CD14-positive monocyte (primary cell): ENCODE measurements at regions of chr5 and their contacts with region 1.

Region 1: DNA sequence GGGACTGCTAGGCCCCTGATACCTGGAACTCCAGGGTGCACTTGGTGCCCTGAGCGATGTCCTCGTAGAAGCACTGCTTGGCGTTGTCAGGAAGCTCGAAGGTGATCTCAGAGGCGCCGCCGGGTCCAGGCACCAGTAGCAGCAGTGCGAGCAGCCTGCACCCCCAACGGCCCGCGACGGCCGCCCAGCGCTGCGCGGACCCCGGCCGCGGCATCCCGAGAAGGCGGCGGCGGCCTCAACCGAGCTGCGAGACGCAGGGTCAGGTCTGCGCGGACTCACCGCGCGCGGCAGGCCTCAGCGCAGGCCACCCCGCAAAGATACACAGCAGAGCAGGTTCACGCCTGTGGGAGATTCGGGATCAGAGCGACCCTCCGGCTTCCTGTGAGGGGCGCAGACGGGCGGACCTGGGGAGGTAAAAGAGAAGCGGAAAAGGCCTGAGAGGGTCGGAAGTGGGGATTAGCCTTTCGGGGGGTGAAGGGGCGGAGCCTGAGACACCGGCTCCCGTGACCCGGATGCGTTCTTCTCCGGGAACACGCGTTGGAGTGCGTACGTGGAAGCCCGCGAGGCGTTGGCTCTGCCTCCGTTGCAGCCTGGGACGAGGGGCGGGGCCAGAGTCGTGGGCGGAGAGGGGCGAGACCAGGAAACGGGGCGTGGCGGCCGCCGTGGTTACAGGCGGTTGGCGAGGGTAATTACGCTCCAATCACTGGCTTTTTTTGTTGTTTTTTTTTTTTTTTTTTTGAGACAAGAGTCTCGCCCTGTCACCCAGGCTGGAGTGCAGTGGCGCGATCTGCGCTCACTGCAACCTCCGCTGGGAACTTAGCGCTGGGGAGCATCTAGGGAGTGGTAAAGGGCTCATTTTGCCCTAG is at the start of gene TMED7:
- DNase-seq: peak; percentile 98 to 99 (median 99)
- H3K4me3 ChIP-seq: peak within 1 kb of the TSS; percentile 77 to 91 (median 85)
- H3K4me3 Mint-ChIP-seq: no peak within 1 kb of the TSS
- H3K27ac ChIP-seq: peak within 1 kb of the TSS; percentile 84 to 97
- H3K27ac Mint-ChIP-seq: peak within 1 kb of the TSS in 6 of 7 donors; percentile 96 to 99 (median 98)
- H3K4me1 ChIP-seq: peaks cover 31 to 39% of the 10 kb centered on the region in 2 donors
- H3K4me1 Mint-ChIP-seq: peaks cover 20% of the 10 kb centered on the region
- H3K27me3 ChIP-seq: no peaks in the 10 kb centered on the region
- H3K27me3 Mint-ChIP-seq: no peaks in the 10 kb centered on the region
- CTCF ChIP-seq: no peak
- polyA plus RNA-seq, gene TMED7: 18.2 to 70.1 (median 65.1) TPM

Region 2: DNA sequence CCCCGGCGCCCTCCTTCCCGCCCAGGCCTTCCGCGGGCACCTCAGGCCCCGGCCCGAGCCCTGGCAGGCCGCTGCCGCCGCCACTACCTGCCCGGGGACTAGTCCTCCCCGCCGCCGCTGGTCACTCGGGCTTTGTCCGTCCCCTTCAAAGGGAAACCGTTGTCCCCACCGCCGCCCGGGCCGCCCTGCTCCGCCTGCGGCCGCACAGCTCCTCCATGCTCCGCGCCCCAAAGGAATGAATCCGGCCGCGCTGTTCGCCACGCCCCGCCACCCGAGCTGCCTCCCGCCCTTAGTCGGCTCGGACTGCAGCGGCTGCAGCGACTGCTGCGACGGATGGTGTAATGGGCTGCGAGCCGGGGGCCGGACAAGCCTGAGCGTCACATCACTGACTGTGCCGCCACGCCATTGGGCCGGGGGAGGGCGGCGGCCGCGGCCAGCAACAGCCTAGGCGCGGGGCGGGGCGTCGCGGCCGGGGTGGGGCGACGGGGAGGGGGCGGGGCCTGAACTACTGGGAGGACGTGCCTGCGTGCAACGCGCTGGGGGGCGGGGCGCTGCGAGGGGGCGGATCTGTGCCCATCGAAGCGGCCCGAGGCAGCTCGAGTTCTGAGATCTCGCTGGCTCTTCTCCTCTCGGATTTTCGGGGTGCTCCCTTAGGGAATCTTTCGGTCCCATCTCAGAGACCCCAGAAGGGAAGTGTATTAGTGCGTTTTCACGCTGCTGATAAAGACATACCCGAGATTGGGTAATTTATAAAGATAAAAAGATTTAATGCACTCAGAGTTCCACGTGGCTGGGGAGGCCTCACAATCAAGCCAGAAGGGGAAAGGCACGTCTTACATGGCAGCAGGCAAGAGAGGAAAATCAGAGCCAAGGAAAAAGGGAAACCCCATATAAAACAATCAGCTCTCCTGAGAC is 81.1 kb before region 1 on chr5 and contains the start of gene FEM1C:
- intact Hi-C with region 1: loop called in 1 of 2 experiments (anchors 2 kb)
- DNase-seq: peak; percentile 96 to 98 (median 97)
- H3K4me3 ChIP-seq: peak within 1 kb of the TSS; percentile 61 to 96 (median 77)
- H3K4me3 Mint-ChIP-seq: peak within 1 kb of the TSS; percentile 92 to 95
- H3K27ac ChIP-seq: peak within 1 kb of the TSS; percentile 91 to 97
- H3K27ac Mint-ChIP-seq: peak within 1 kb of the TSS; percentile 94 to 99 (median 98)
- H3K4me1 ChIP-seq: peaks cover 23 to 42% of the 10 kb centered on the region in 2 donors
- H3K4me1 Mint-ChIP-seq: peaks cover 41% of the 10 kb centered on the region
- H3K27me3 ChIP-seq: no peaks in the 10 kb centered on the region
- H3K27me3 Mint-ChIP-seq: no peaks in the 10 kb centered on the region
- CTCF ChIP-seq: no peak
- polyA plus RNA-seq, gene FEM1C: 2.5 to 18.2 (median 2.6) TPM

Region 3: GRCh38 chr5:115586601-115587048 is 39.2 kb before region 1 on chr5:
- intact Hi-C with region 1: no loop called
- DNase-seq: peak; percentile 17 to 53 (median 24)
- H3K4me3 ChIP-seq: no peak overlapping the region
- H3K4me3 Mint-ChIP-seq: no peak overlapping the region
- H3K27ac ChIP-seq: no peak overlapping the region
- H3K27ac Mint-ChIP-seq: no peak overlapping the region
- H3K4me1 ChIP-seq: peaks cover 0 to 3% of the 10 kb centered on the region in 2 donors
- H3K4me1 Mint-ChIP-seq: peaks cover 5% of the 10 kb centered on the region
- H3K27me3 ChIP-seq: no peaks in the 10 kb centered on the region
- H3K27me3 Mint-ChIP-seq: peaks cover 1 to 3% (median 2%) of the 10 kb centered on the region in 3 donors
- CTCF ChIP-seq: peak; percentile 83

Region 4: GRCh38 chr5:115611873-115612272 is 13.9 kb before region 1 on chr5:
- intact Hi-C with region 1: loop called in 1 of 2 experiments (anchors 2 kb)
- DNase-seq: no peak
- H3K4me3 ChIP-seq: no peak overlapping the region
- H3K4me3 Mint-ChIP-seq: no peak overlapping the region
- H3K27ac ChIP-seq: no peak overlapping the region
- H3K27ac Mint-ChIP-seq: no peak overlapping the region
- H3K4me1 ChIP-seq: no peaks in the 10 kb centered on the region
- H3K4me1 Mint-ChIP-seq: no peaks in the 10 kb centered on the region
- H3K27me3 ChIP-seq: no peaks in the 10 kb centered on the region
- H3K27me3 Mint-ChIP-seq: peaks cover 0 to 1% (median 0%) of the 10 kb centered on the region in 3 donors
- CTCF ChIP-seq: no peak

Region 5: DNA sequence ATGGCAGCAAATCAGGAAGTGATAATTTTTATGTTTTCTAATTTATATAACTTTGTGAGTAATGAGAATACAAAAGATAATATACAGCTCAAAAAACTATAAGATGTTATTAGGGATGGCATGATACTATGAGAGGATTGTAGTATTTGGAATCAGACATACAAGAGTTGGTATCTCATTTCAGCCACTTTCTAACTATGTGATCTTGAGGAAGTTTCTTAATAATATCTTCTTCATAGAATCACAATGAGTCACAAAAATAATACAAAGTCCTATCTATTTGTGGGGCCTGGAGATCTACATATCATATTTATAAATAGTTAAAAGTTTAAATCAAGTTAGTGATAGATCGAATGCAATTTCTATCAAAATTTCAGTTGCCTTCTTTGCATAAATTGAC is 23.7 kb after region 1 on chr5:
- intact Hi-C with region 1: no loop called
- DNase-seq: no peak
- H3K4me3 ChIP-seq: no peak overlapping the region
- H3K4me3 Mint-ChIP-seq: no peak overlapping the region
- H3K27ac ChIP-seq: no peak overlapping the region
- H3K27ac Mint-ChIP-seq: no peak overlapping the region
- H3K4me1 ChIP-seq: no peaks in the 10 kb centered on the region
- H3K4me1 Mint-ChIP-seq: no peaks in the 10 kb centered on the region
- H3K27me3 ChIP-seq: peaks cover 0 to 2% of the 10 kb centered on the region in 2 donors
- H3K27me3 Mint-ChIP-seq: peaks cover 4 to 7% (median 5%) of the 10 kb centered on the region in 3 donors
- CTCF ChIP-seq: no peak

Region 6: GRCh38 chr5:115841382-115842088 is 215.7 kb after region 1 on chr5 and contains the starts of genes AP3S1 and ATG12:
- intact Hi-C with region 1: loop called (anchors 5 kb)
- DNase-seq: peak; percentile 91 to 96 (median 92)
- H3K4me3 ChIP-seq: peak within 1 kb of the TSS; percentile 75 to 92 (median 91)
- H3K4me3 Mint-ChIP-seq: peak within 1 kb of the TSS; percentile 95 to 98
- H3K27ac ChIP-seq: peak within 1 kb of the TSS; percentile 96 to 99
- H3K27ac Mint-ChIP-seq: peak within 1 kb of the TSS; percentile 98 to 100 (median 100)
- H3K4me1 ChIP-seq: peaks cover 36 to 48% of the 10 kb centered on the region in 2 donors
- H3K4me1 Mint-ChIP-seq: peaks cover 44% of the 10 kb centered on the region
- H3K27me3 ChIP-seq: no peaks in the 10 kb centered on the region
- H3K27me3 Mint-ChIP-seq: no peaks in the 10 kb centered on the region
- CTCF ChIP-seq: no peak
- polyA plus RNA-seq, gene AP3S1: 30.2 to 86.1 (median 84.8) TPM
- polyA plus RNA-seq, gene ATG12: 44.3 to 143 (median 101) TPM

Region 7: GRCh38 chr5:116084871-116085715 is 459.3 kb after region 1 on chr5 and contains the start of gene COMMD10:
- intact Hi-C with region 1: loop called (anchors 5 to 10 kb)
- DNase-seq: peak; percentile 60 to 81 (median 70)
- H3K4me3 ChIP-seq: peak within 1 kb of the TSS; percentile 75 to 92 (median 78)
- H3K4me3 Mint-ChIP-seq: peak within 1 kb of the TSS; percentile 94
- H3K27ac ChIP-seq: peak within 1 kb of the TSS; percentile 70 to 84
- H3K27ac Mint-ChIP-seq: peak within 1 kb of the TSS; percentile 90 to 98 (median 94)
- H3K4me1 ChIP-seq: peaks cover 18 to 22% of the 10 kb centered on the region in 2 donors
- H3K4me1 Mint-ChIP-seq: peaks cover 30% of the 10 kb centered on the region
- H3K27me3 ChIP-seq: no peaks in the 10 kb centered on the region
- H3K27me3 Mint-ChIP-seq: no peaks in the 10 kb centered on the region
- CTCF ChIP-seq: no peak
- polyA plus RNA-seq, gene COMMD10: 16.9 to 86.1 (median 61.2) TPM